PC-3 (cell line): ENCODE measurements at regions of chr7 and their contacts with region 1.

Region 1: DNA sequence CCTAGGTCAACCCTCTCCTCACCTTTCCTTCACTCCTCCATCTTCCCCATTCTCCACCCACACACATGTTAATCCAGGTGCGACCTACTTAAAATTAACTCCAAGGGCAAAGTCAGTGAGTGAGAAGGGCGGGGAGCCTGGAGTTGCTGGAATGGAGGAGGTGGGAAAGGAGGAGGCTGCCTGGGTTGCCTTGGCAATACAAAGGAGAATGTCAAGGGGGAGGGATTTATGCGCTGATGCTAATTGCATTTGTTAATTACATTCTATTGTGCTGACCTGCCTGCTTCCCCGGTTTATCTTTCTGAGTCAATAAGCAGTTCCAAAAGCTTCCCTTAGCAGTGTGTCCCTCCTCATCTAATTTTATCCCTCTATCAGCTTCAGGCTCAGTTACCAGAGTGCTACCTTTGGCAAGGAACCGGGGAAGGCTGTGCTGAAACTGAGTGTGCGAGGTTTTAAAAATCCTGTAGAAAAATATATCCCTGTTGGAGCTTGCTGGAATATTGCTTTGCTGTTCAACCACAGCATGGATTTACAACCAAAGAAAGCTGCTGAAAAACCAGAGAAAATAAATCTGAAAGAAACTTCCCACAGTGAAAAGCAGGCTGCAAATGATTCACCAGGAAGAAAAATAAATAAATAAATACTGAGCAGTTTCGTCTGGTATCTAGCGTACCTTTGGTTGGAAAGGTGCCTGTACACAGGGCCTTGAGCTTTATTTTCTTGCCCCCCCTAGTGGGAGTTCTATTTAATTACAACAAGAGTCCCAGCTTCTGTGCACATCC is 113.2 kb upstream of the DGKB start:
- DNase-seq: peak; percentile 90
- ATAC-seq: peak; percentile 83
- H3K4me3 ChIP-seq: peak overlapping the region; percentile 63
- H3K27ac ChIP-seq: peak overlapping the region; percentile 92
- H3K4me1 ChIP-seq: peaks cover 21% of the 10 kb centered on the region
- H3K27me3 ChIP-seq: no peaks in the 10 kb centered on the region
- CTCF ChIP-seq: peak; percentile 77

Region 2: DNA sequence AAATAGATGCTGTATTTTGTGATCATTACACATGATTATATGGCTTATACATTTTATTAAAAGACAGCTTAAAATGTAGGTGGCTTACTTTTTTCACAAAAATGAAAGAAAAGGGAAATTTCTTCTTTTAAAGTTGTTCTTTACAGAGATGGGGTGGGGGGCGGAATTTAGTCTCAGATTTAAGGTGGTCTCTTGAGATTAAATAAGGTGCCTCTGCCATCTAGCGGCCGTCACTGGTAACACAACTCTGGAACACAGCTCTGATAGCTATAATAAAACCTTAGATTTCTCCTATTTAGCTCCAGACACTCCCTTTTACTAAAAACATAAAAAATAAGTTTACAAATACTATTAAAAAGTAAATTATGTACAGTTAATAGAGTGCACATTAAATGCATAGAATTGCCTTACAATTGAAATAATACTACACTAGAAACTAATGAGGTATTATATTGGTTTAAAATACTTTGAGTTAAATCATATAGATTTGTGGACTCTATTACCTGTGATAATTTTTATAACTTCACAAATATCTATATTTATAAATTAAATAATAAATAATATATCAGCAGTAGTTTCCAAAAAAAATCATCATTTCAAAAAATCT is 324.0 kb before region 1 on chr7:
- CTCF ChIA-PET with region 1: interaction called, 3 read pairs
- POLR2A ChIA-PET with region 1: interaction called, 12 read pairs
- intact Hi-C with region 1: no loop called
- DNase-seq: peak; percentile 57
- ATAC-seq: peak; percentile 29; the same call in 1 of the 2 replicates
- H3K4me3 ChIP-seq: no peak overlapping the region
- H3K27ac ChIP-seq: no peak overlapping the region
- H3K4me1 ChIP-seq: no peaks in the 10 kb centered on the region
- H3K27me3 ChIP-seq: no peaks in the 10 kb centered on the region
- CTCF ChIP-seq: peak; percentile 93

Region 3: GRCh38 chr7:14717816-14718215 is 297.9 kb before region 1 on chr7:
- CTCF ChIA-PET with region 1: interaction called, 28 read pairs
- POLR2A ChIA-PET with region 1: no interaction called
- intact Hi-C with region 1: loop called (anchors 1 kb)
- DNase-seq: peak; percentile 57
- ATAC-seq: peak; percentile 47
- H3K4me3 ChIP-seq: no peak overlapping the region
- H3K27ac ChIP-seq: peak overlapping the region; percentile 63
- H3K4me1 ChIP-seq: peaks cover 9% of the 10 kb centered on the region
- H3K27me3 ChIP-seq: no peaks in the 10 kb centered on the region
- CTCF ChIP-seq: peak; percentile 81

Region 4: GRCh38 chr7:14836571-14837189 is 179.1 kb before region 1 on chr7:
- CTCF ChIA-PET with region 1: no interaction called
- POLR2A ChIA-PET with region 1: no interaction called
- intact Hi-C with region 1: loop called (anchors 10 kb)
- DNase-seq: peak; percentile 84
- ATAC-seq: peak; percentile 95
- H3K4me3 ChIP-seq: peak overlapping the region; percentile 48; the same call in 1 of the 2 replicates
- H3K27ac ChIP-seq: peak overlapping the region; percentile 87
- H3K4me1 ChIP-seq: peaks cover 73% of the 10 kb centered on the region
- H3K27me3 ChIP-seq: no peaks in the 10 kb centered on the region
- CTCF ChIP-seq: no peak

Region 5: GRCh38 chr7:14911077-14911476 is 104.7 kb before region 1 on chr7:
- CTCF ChIA-PET with region 1: no interaction called
- POLR2A ChIA-PET with region 1: no interaction called
- intact Hi-C with region 1: no loop called
- DNase-seq: no peak
- ATAC-seq: no peak
- H3K4me3 ChIP-seq: no peak overlapping the region
- H3K27ac ChIP-seq: no peak overlapping the region
- H3K4me1 ChIP-seq: no peaks in the 10 kb centered on the region
- H3K27me3 ChIP-seq: no peaks in the 10 kb centered on the region
- CTCF ChIP-seq: no peak

Region 6: GRCh38 chr7:15005672-15006071 is 10.1 kb before region 1 on chr7:
- CTCF ChIA-PET with region 1: interaction called, 12 read pairs
- POLR2A ChIA-PET with region 1: interaction called, 5 read pairs
- intact Hi-C with region 1: no loop called
- DNase-seq: no peak
- ATAC-seq: no peak
- H3K4me3 ChIP-seq: no peak overlapping the region
- H3K27ac ChIP-seq: no peak overlapping the region
- H3K4me1 ChIP-seq: no peaks in the 10 kb centered on the region
- H3K27me3 ChIP-seq: no peaks in the 10 kb centered on the region
- CTCF ChIP-seq: no peak

Region 7: GRCh38 chr7:15130666-15131541 is 115.2 kb after region 1 on chr7:
- CTCF ChIA-PET with region 1: interaction called, 10 read pairs
- POLR2A ChIA-PET with region 1: no interaction called
- intact Hi-C with region 1: loop called (anchors 2 kb)
- DNase-seq: peak; percentile 80
- ATAC-seq: peak; percentile 98
- H3K4me3 ChIP-seq: no peak overlapping the region
- H3K27ac ChIP-seq: peak overlapping the region; percentile 17; the same call in 1 of the 2 replicates
- H3K4me1 ChIP-seq: peaks cover 16% of the 10 kb centered on the region
- H3K27me3 ChIP-seq: no peaks in the 10 kb centered on the region
- CTCF ChIP-seq: no peak

Region 8: GRCh38 chr7:15213093-15213492 is 197.4 kb after region 1 on chr7:
- CTCF ChIA-PET with region 1: interaction called, 20 read pairs
- POLR2A ChIA-PET with region 1: no interaction called
- intact Hi-C with region 1: no loop called
- DNase-seq: no peak
- ATAC-seq: no peak
- H3K4me3 ChIP-seq: no peak overlapping the region
- H3K27ac ChIP-seq: no peak overlapping the region
- H3K4me1 ChIP-seq: peaks cover 18% of the 10 kb centered on the region
- H3K27me3 ChIP-seq: no peaks in the 10 kb centered on the region
- CTCF ChIP-seq: no peak

Region 9: GRCh38 chr7:15954671-15955354 is 939.1 kb after region 1 on chr7:
- CTCF ChIA-PET with region 1: no interaction called
- POLR2A ChIA-PET with region 1: no interaction called
- intact Hi-C with region 1: no loop called
- DNase-seq: no peak
- ATAC-seq: no peak
- H3K4me3 ChIP-seq: no peak overlapping the region
- H3K27ac ChIP-seq: no peak overlapping the region
- H3K4me1 ChIP-seq: no peaks in the 10 kb centered on the region
- H3K27me3 ChIP-seq: no peaks in the 10 kb centered on the region
- CTCF ChIP-seq: no peak